ENCODE measurements at regions of chr1 and their contacts with region 1.

Region 1: GRCh38 chr1:75785983-75786853 is at the start of gene RABGGTB:
- DNase-seq: peak; percentile 89
- ATAC-seq: peak; percentile 92
- H3K4me3 Mint-ChIP-seq: peak within 1 kb of the TSS; percentile 98
- H3K27ac Mint-ChIP-seq: peak within 1 kb of the TSS; percentile 97
- H3K4me1 Mint-ChIP-seq: peaks cover 65% of the 10 kb centered on the region
- H3K27me3 Mint-ChIP-seq: no peaks in the 10 kb centered on the region
- CTCF ChIP-seq: no peak
- total RNA-seq, gene RABGGTB: 203 and 234 TPM in 2 replicates

Region 2: DNA sequence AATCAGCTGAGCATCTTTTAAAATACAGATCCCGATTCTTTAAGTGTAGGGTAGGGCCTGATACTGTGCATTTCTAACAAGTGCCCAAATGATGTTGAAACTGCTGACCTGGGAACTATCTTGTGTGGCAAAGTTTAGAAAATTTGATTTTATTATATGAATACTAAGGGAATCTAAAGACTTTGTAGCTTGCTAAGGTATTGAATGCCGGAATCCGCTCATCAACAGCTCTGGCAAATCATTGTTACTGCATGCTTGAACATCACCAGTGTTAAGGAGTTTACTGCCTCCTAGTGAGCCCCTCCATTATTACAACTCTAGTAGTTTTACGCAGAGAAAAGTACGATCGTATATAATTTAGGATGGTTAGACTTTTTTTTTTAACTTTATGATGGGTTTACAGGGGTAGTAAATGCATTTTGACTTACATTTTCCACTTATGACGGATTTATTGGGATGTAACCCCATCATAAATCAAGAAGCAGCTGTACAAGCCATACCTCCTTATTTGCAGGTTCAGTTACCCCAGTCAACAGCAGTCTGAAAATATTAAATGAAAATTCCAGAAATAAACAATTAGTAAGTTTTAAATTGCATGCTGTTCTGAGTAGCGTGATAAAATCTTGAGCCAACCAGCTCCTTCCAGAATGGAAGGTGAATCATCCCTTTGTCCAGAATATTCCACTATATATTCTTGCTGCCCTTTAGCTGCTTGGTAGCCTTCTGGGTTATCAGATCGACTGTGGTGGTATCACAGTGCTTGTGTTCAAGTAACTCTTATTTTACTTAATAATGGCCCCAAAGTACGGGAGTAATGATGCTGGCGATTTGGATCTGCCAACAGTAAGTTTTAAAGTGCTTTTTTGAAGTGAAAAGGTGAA is 1052.4 kb before region 1 on chr1:
- CTCF ChIA-PET with region 1: no interaction called
- POLR2A ChIA-PET with region 1: interaction called, 5 read pairs
- intact Hi-C with region 1: loop called (anchors 2 kb)
- DNase-seq: no peak
- ATAC-seq: peak; percentile 61
- H3K4me3 Mint-ChIP-seq: peak overlapping the region; percentile 96
- H3K27ac Mint-ChIP-seq: peak overlapping the region; percentile 97
- H3K4me1 Mint-ChIP-seq: peaks cover 40% of the 10 kb centered on the region
- H3K27me3 Mint-ChIP-seq: no peaks in the 10 kb centered on the region
- CTCF ChIP-seq: no peak

Region 3: DNA sequence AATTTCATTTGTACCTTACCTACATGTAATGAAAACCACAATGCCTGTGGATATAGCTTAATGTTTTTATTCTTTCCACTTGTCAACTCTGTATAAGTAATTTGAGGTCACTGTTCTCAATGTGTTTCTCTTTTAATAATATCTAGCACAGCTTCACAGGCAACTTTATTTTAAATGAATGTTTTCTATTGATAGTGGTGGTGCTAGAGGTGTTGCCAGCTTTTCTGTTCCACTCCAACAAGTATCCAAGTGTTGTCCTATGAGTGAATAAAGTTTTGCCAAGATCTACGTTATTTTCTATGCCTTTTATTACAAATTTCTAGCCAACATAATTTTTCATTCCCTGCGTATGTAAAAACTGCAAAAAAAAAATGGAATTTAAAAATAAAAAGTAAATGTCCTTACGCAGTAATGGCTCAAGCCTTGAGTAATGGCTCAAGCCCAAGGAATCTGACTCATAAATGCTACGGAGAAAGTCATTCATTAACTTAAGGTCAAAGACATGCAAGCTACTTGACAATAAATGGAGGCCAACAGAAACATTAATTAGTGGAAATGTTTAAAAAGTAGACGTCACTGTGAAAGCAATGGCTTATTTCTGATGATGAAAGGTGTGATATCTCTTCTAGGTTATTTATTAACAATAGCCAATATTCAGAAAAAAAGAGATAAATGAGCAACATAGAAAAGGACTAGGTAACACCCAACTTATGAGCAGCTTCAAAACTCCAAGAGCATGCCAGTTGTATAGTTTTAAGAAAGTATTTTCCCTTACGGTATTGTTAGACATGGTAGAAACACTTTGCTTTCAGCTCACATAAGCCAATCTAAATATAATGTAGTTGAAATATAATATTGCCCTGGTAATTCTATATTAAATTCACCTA is 246.7 kb before region 1 on chr1:
- CTCF ChIA-PET with region 1: no interaction called
- POLR2A ChIA-PET with region 1: no interaction called
- intact Hi-C with region 1: no loop called
- DNase-seq: no peak
- ATAC-seq: no peak
- H3K4me3 Mint-ChIP-seq: no peak overlapping the region
- H3K27ac Mint-ChIP-seq: no peak overlapping the region
- H3K4me1 Mint-ChIP-seq: no peaks in the 10 kb centered on the region
- H3K27me3 Mint-ChIP-seq: no peaks in the 10 kb centered on the region
- CTCF ChIP-seq: no peak

Region 4: DNA sequence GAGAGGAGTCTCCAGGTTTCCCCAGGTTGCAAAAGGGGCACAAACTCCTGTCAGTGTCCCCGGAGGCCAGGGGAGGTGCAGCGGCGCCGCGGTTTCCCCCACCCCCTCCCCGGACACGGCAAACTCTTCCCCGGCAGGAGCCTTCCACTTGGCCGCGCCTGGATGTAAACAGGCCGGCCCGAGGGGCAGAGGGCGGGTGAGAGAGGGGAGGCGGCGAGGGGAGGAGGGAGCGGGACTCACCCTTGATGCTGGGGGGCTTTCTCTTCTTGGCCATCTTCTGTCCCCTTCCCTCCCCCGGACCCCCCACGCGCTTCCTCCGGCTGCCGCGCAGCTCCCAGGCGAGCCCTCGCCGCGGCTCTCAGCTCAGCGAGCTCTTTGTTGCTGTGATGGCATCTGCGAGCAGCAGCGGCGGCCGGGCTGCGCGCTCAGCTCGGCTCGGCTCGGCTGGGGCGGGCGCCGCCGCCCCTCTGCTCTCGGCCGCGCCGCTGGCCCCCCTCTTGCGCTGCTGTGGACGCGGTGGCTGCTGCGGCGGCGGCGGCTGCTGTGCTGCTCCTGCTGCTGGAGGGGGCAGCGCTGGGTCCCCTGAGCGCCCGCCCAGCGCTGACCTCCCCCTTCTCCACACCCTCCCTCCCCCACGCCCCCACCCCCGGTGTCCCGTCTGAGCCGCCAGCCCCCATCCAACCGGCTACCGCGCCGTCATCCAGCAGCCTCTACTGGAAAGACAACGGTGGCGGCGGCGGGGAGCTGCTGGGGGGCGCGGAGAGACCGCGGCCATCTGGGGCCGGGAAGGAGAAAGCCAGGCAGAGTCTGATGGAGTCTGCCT is 170.4 kb before region 1 on chr1:
- CTCF ChIA-PET with region 1: no interaction called
- POLR2A ChIA-PET with region 1: no interaction called
- intact Hi-C with region 1: loop called (anchors 10 kb)
- DNase-seq: no peak
- ATAC-seq: peak; percentile 30
- H3K4me3 Mint-ChIP-seq: peak overlapping the region; percentile 69
- H3K27ac Mint-ChIP-seq: no peak overlapping the region
- H3K4me1 Mint-ChIP-seq: peaks cover 21% of the 10 kb centered on the region
- H3K27me3 Mint-ChIP-seq: peaks cover 57% of the 10 kb centered on the region
- CTCF ChIP-seq: no peak

Region 5: GRCh38 chr1:75745276-75745675 is 40.9 kb before region 1 on chr1:
- CTCF ChIA-PET with region 1: no interaction called
- POLR2A ChIA-PET with region 1: interaction called, 10 read pairs
- intact Hi-C with region 1: no loop called
- DNase-seq: no peak
- ATAC-seq: peak; percentile 75
- H3K4me3 Mint-ChIP-seq: no peak overlapping the region
- H3K27ac Mint-ChIP-seq: no peak overlapping the region
- H3K4me1 Mint-ChIP-seq: peaks cover 11% of the 10 kb centered on the region
- H3K27me3 Mint-ChIP-seq: no peaks in the 10 kb centered on the region
- CTCF ChIP-seq: no peak

Region 6: DNA sequence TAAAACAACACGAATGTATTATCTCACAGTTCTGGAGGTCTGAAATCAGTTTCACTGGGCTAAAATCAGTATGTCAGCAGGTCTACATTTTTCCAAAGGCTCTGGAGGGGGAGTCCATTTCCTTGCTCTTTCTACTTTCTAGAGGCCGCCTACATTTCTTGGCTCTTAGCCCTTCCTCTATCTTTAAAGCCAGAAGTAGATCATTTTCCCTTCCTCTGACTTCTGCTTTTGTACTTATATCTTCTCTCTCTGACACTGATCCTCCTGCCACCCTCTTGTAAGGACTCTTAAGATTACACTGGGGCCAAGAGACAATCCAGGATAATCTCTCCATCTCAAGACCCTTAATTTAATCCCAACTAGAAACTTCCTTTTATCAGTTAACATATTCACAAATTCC is 51.9 kb after region 1 on chr1:
- CTCF ChIA-PET with region 1: no interaction called
- POLR2A ChIA-PET with region 1: no interaction called
- intact Hi-C with region 1: no loop called
- DNase-seq: no peak
- ATAC-seq: no peak
- H3K4me3 Mint-ChIP-seq: no peak overlapping the region
- H3K27ac Mint-ChIP-seq: no peak overlapping the region
- H3K4me1 Mint-ChIP-seq: no peaks in the 10 kb centered on the region
- H3K27me3 Mint-ChIP-seq: no peaks in the 10 kb centered on the region
- CTCF ChIP-seq: no peak

Region 7: GRCh38 chr1:76074321-76075187 is 288.3 kb after region 1 on chr1 and contains the start of gene ST6GALNAC3:
- CTCF ChIA-PET with region 1: no interaction called
- POLR2A ChIA-PET with region 1: interaction called, 3 read pairs
- intact Hi-C with region 1: loop called (anchors 2 kb)
- DNase-seq: peak; percentile 72
- ATAC-seq: peak; percentile 86
- H3K4me3 Mint-ChIP-seq: peak within 1 kb of the TSS; percentile 88
- H3K27ac Mint-ChIP-seq: peak within 1 kb of the TSS; percentile 81
- H3K4me1 Mint-ChIP-seq: peaks cover 35% of the 10 kb centered on the region
- H3K27me3 Mint-ChIP-seq: peaks cover 9% of the 10 kb centered on the region
- CTCF ChIP-seq: no peak
- total RNA-seq, gene ST6GALNAC3: 9.1 and 12.6 TPM in 2 replicates

Region 8: GRCh38 chr1:77779529-77780281 is 1993.5 kb after region 1 on chr1 and contains the start of gene MIGA1:
- CTCF ChIA-PET with region 1: no interaction called
- POLR2A ChIA-PET with region 1: no interaction called
- intact Hi-C with region 1: loop called (anchors 5 kb)
- DNase-seq: peak; percentile 69
- ATAC-seq: peak; percentile 96
- H3K4me3 Mint-ChIP-seq: peak within 1 kb of the TSS; percentile 92
- H3K27ac Mint-ChIP-seq: peak within 1 kb of the TSS; percentile 82
- H3K4me1 Mint-ChIP-seq: peaks cover 28% of the 10 kb centered on the region
- H3K27me3 Mint-ChIP-seq: no peaks in the 10 kb centered on the region
- CTCF ChIP-seq: no peak
- total RNA-seq, gene MIGA1: 11.1 and 13.0 TPM in 2 replicates